Endothelial cell of umbilical vein (primary cell): ENCODE measurements at regions of chr22 and their contacts with region 1.

Region 1: DNA sequence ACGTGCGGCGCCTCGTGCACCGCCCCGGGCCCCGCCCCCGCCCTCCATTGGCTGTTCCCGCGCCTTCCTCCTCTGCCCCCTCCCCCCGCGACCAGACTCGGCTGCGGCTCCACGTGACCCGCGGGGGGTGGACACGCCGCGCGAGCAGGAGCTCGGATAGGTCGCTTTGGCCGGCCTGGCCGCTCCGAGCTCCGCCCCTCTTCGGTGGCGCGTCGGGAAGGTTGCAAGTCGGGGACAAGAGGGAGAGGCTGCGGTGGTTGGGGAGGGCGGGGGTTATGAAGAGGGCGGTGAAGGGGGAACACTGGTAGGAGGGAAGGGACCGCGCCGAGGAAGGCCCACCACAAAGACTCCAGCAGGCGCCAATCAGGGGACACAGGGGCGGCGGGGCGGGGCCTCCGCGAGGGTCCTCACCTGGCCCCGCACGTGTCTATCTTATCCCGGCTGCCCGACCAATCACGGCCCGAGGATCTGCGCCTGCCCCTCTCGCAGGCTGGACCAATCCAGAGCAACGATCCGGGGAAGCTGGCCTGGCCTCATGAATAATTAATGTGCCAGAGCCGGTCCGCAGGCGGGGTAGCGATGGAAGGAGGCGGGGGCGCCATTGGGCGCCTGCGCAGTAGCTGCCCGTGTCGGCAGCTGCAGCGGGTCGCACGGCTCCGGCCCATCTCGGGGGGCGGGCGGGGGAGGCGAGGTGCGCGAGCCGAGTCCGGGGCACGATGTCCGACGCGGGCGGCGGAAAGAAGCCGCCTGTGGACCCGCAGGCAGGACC is at the start of gene TEF:
- DNase-seq: peak; percentile 98
- H3K4me3 ChIP-seq: peak within 1 kb of the TSS; percentile 51 to 66 (median 66)
- H3K27ac ChIP-seq: peak within 1 kb of the TSS; percentile 79
- H3K4me1 ChIP-seq: peaks cover 11% of the 10 kb centered on the region
- H3K27me3 ChIP-seq: peaks cover 0 to 5% of the 10 kb centered on the region in 2 experiments
- CTCF ChIP-seq: no peak
- POLR2A ChIP-seq: no peak
- total RNA-seq, gene TEF: 2.2 and 2.9 TPM in 2 replicates

Region 2: DNA sequence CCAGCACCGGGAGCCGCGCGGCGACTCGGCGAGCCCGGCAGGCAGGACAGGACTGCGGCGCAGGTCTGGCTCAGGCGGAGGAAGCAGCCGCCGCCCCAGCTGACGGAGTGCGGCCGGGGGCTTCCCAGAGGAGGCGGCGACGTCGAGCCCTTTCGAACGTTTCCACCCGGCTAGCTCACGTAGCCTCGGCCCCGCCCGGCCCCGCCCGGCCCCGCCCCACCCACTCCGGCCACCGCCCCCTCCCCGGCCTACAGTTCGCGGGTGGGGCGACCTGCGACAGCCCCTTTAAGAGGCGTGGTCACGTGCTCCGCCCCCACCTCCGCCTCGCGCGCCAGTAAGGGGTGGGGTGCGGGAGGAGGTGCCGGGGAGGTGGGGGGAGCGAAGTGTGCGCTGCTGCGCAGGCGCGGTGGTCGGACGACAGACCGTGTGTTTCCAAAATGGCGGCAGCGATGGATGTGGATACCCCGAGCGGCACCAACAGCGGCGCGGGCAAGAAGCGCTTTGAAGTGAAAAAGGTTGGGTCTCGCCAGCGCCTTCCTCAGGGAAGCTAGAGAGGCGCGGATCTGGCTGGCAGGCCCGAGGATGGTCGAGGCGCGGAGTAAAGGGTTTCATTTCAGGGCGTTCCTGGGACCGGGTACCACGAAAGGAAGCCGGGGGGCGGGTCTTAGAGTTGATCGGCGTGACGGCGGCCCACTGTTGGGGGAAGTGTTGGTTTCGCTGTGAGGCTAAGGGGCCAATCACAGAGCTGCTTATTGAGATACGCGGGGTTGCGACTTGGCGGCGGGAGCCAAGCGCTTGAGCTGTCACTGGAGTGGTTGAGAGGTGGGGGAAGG is 430.3 kb before region 1 on chr22 and contains the start of gene RBX1:
- CTCF ChIA-PET with region 1: no interaction called
- POLR2A ChIA-PET with region 1: no interaction called
- dilution Hi-C with region 1: no loop called
- intact Hi-C with region 1: loop called (anchors 2 kb)
- DNase-seq: peak; percentile 97
- H3K4me3 ChIP-seq: peak within 1 kb of the TSS; percentile 84 to 100 (median 100)
- H3K27ac ChIP-seq: peak within 1 kb of the TSS; percentile 98
- H3K4me1 ChIP-seq: peaks cover 19% of the 10 kb centered on the region
- H3K27me3 ChIP-seq: no peaks in the 10 kb centered on the region
- CTCF ChIP-seq: no peak
- POLR2A ChIP-seq: peak; percentile 93
- total RNA-seq, gene RBX1: 74.7 and 77.7 TPM in 2 replicates

Region 3: DNA sequence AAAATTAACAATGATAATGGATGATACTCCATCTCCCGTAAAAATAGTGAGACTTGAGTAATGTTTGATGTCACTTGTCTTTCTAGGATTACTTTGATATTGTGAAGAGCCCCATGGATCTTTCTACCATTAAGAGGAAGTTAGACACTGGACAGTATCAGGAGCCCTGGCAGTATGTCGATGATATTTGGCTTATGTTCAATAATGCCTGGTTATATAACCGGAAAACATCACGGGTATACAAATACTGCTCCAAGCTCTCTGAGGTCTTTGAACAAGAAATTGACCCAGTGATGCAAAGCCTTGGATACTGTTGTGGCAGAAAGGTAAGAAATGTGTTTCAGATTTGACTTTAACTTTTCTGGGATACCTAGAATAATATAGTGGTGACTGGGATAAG is 224.4 kb before region 1 on chr22:
- CTCF ChIA-PET with region 1: no interaction called
- POLR2A ChIA-PET with region 1: no interaction called
- dilution Hi-C with region 1: no loop called
- intact Hi-C with region 1: no loop called
- DNase-seq: no peak
- H3K4me3 ChIP-seq: no peak overlapping the region
- H3K27ac ChIP-seq: no peak overlapping the region
- H3K4me1 ChIP-seq: no peaks in the 10 kb centered on the region
- H3K27me3 ChIP-seq: no peaks in the 10 kb centered on the region
- CTCF ChIP-seq: no peak
- POLR2A ChIP-seq: no peak

Region 4: GRCh38 chr22:41285820-41286638 is 95.5 kb before region 1 on chr22 and contains the start of gene RANGAP1:
- CTCF ChIA-PET with region 1: no interaction called
- POLR2A ChIA-PET with region 1: interaction called, 4 read pairs
- dilution Hi-C with region 1: no loop called
- intact Hi-C with region 1: loop called (anchors 5 kb)
- DNase-seq: peak; percentile 99
- H3K4me3 ChIP-seq: peak within 1 kb of the TSS; percentile 51 to 88 (median 55)
- H3K27ac ChIP-seq: peak within 1 kb of the TSS; percentile 71
- H3K4me1 ChIP-seq: peaks cover 57% of the 10 kb centered on the region
- H3K27me3 ChIP-seq: no peaks in the 10 kb centered on the region
- CTCF ChIP-seq: peak in 1 of 2 donors; percentile 28
- POLR2A ChIP-seq: peak; percentile 72
- total RNA-seq, gene RANGAP1: 154 and 169 TPM in 2 replicates

Region 5: DNA sequence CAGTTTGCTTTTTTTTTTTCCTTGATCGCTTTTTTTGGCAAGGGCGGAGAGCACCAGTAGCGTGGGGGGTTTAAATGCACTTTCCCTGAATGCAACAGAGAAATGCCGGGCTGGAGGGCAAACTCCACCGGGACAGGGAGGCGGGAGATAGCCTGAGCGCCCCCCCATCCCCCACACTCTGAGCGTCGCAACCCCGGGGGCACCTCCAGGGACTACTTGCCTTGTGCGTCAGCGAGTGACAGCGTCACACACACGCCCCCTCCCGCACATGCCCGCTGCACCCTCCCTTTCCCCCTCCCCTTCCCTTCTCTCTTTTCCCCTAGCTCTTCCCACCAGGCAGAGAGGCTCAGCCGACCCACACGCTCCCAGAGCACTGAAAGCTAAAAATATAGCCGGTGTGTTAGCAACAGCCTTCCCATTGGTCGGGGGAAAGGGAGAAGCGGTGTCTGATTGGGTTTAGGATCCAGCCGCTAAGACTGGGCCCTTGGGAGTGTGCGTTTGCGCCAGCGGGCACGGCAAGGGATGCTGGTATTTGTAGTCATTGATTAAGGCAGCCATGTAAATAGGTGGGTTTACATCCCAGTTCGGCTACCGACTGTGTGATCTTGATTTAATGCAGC is 66.8 kb after region 1 on chr22:
- CTCF ChIA-PET with region 1: interaction called, 3 read pairs
- POLR2A ChIA-PET with region 1: interaction called, 6 read pairs
- dilution Hi-C with region 1: no loop called
- intact Hi-C with region 1: loop called (anchors 1 kb)
- DNase-seq: peak; percentile 100
- H3K4me3 ChIP-seq: peak overlapping the region; percentile 83 to 96 (median 95)
- H3K27ac ChIP-seq: peak overlapping the region; percentile 83
- H3K4me1 ChIP-seq: peaks cover 4% of the 10 kb centered on the region
- H3K27me3 ChIP-seq: no peaks in the 10 kb centered on the region
- CTCF ChIP-seq: no peak
- POLR2A ChIP-seq: peak; percentile 19

Region 6: DNA sequence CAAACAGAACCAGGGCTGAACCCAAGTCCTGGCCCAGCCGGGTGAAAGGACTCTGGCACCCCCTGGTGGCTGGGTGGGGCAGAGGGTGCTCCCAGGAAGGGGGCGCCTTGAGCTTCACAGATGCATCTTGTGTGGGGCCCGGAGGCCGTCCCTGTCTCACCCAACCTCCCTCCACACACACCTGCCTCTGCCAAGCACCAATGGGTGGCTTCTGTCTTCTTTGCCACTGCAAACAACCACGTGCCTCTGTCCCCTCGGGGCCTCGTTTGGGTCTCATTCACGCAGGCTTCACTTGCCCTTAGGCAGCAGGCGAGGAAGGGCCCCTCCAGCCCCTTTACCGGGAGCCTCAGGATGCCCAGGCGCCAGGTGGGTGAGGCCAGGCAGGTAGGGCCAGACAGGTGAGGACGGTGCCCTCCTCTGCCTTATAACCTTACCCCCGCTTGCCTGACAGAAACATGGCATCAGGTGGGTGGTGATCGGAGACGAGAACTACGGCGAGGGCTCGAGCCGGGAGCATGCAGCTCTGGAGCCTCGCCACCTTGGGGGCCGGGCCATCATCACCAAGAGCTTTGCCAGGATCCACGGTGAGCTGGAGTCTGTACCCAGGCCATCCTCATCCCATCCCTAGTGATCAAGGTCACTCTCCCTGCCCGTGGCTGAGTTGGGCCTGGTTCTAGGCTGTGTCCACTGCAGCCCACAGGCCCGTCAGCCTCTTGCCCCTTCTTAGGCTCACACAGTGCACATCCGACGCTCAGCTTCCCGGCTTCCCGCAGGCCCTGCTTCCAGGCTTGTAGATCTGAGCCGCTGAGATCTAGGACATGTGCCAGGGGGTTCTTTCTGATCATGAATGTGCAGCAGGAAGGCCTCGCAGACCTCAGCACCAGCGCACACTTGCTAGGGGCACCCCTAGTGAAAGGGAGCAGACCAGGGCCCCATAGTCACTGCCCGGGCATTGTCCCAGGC is 145.6 kb after region 1 on chr22:
- CTCF ChIA-PET with region 1: interaction called, 11 read pairs
- POLR2A ChIA-PET with region 1: no interaction called
- dilution Hi-C with region 1: no loop called
- intact Hi-C with region 1: no loop called
- DNase-seq: no peak
- H3K4me3 ChIP-seq: no peak overlapping the region
- H3K27ac ChIP-seq: no peak overlapping the region
- H3K4me1 ChIP-seq: no peaks in the 10 kb centered on the region
- H3K27me3 ChIP-seq: no peaks in the 10 kb centered on the region
- CTCF ChIP-seq: peak; percentile 87 to 92
- POLR2A ChIP-seq: peak; percentile 13